Heart left ventricle (tissue), 16 donors: ENCODE measurements at regions of chr5 and their contacts with region 1.

Region 1: DNA sequence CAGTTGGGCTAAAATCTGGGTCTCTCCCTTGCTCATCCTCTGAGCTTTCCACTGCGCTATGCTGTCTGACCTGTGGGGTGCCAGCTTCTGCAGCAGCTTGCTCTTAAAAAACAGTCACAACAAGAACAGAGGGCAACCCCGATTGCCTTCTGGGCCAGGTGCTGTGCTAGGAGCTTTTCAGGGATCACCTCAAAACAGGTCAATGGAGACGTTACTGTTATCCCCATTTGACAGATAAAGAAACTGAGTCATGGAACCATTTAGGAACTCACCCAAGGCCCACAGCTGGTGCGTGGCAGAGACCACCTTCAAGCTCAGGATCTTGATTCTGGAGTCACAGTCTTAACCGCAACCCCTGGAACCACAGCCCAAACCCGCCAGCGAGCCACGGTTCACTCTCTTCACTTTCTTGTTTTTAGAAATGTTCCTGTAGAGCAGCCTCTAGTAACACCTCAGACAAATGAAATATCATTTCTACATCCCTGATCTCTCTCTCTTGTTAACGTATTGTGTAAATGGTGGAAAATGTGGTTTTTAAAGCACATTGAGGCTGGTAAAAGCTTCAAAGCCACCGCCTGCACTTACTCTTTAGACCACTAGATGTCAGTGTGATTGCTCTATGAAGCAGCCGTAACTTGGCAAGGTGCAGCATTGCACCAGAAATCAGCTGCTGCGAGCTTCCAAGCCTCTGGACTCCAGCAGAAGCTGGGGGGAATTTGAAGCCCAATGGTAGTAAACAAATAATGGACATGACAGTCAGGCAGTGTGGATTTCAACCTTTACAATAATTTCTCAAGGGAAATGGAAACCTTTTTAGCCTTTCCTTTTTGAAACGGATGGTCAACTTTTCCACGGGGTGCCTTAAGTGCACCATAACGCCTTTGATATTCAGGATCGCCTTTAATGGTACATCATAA is 1.7 kb downstream of the FYB1 start:
- DNase-seq: peak; percentile 63 to 79 (median 69)
- ATAC-seq: peak; percentile 30 to 85 (median 82)
- H3K4me3 ChIP-seq: peak overlapping the region in 3 of 12 donors; percentile 1 to 57 (median 39)
- H3K27ac ChIP-seq: peak overlapping the region in 1 of 12 donors; percentile 84
- H3K4me1 ChIP-seq: peaks cover 0 to 74% (median 0%) of the 10 kb centered on the region in 12 donors
- H3K27me3 ChIP-seq: peaks cover 0 to 8% (median 0%) of the 10 kb centered on the region in 9 donors
- CTCF ChIP-seq: peak; percentile 90 to 97 (median 94)
- POLR2A ChIP-seq: no peak

Region 2: DNA sequence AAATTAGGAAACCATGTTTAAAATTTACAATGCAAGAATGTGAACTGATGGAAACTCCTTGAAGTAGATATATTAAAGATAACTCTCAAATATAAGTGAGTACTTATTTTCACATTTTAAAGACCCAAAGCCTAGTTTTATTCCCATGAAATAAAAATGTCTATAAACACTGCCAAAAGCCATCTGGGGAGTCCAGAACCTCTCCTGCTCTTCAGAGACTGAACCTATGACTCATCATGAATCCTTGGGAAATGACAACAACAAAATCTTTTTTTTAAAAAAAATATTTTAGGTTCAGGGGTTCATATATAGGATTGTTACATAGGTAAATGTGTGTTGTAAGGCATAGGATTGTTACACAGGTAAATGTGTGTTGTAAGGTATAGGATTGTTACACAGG is 35.6 kb after region 1 on chr5:
- intact Hi-C with region 1: no loop called
- DNase-seq: no peak
- ATAC-seq: no peak
- H3K4me3 ChIP-seq: no peak overlapping the region
- H3K27ac ChIP-seq: no peak overlapping the region
- H3K4me1 ChIP-seq: peaks cover 0 to 49% (median 0%) of the 10 kb centered on the region in 12 donors
- H3K27me3 ChIP-seq: peaks cover 0 to 2% (median 0%) of the 10 kb centered on the region in 9 donors
- CTCF ChIP-seq: no peak
- POLR2A ChIP-seq: no peak

Region 3: DNA sequence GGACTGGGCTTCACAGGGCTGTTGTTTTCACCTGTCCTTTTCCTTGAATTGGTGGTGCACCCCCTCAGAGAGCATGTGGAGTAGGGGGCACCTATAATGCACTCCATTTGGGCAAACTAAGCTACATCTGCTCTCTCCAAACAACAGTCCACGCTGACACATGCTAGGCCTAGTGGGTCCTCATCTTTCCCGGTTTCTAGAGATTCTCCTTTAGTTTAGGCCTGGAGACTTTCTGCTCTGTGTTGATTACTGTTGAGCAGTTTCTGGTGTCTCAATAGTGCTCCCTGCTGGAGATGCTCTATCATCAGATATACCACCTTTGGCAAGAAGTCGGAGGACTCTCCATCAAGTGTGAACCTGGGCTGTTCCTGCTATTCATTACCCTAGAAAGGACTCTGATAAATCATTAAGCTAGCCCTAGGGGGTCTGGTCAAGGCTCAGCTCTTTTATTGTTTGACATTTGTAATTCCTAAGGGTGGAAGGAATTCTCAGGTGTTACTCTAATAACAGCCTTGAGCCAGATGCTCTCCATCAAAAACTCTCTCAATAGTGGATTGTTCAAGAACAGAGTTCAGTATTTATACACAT is 65.7 kb after region 1 on chr5:
- intact Hi-C with region 1: loop called in 9 of 10 experiments (anchors 2 to 5 kb)
- DNase-seq: peak in 2 of 5 donors; percentile 26 to 29
- ATAC-seq: peak; percentile 47 to 90 (median 82)
- H3K4me3 ChIP-seq: no peak overlapping the region
- H3K27ac ChIP-seq: no peak overlapping the region
- H3K4me1 ChIP-seq: peaks cover 0 to 6% (median 0%) of the 10 kb centered on the region in 12 donors
- H3K27me3 ChIP-seq: no peaks in the 10 kb centered on the region
- CTCF ChIP-seq: peak; percentile 38 to 70 (median 58)
- POLR2A ChIP-seq: no peak

Region 4: DNA sequence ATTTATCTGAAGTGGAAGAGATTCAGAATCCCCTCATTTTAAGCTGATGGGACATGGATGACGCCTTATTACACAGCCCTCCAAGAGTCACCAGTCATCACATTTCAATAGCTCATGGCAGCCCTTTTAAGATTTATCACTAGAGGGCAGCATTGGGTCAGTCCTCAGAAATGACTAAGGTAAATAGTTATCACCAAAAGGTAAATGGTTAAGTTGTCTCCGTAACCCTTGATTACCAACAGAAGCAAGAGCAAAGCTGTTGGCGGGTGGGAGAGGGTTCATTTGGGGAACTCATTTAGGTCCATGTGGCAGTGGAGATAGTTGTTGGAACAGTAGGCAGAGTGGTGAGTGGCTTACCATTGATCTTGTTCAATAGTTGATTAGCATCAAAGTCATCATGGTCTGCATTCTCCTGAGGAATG is 158.7 kb after region 1 on chr5:
- intact Hi-C with region 1: loop called in 3 of 10 experiments (anchors 10 kb)
- DNase-seq: no peak
- ATAC-seq: peak in 3 of 4 donors; percentile 49 to 79 (median 58)
- H3K4me3 ChIP-seq: no peak overlapping the region
- H3K27ac ChIP-seq: no peak overlapping the region
- H3K4me1 ChIP-seq: peaks cover 0 to 9% (median 0%) of the 10 kb centered on the region in 12 donors
- H3K27me3 ChIP-seq: no peaks in the 10 kb centered on the region
- CTCF ChIP-seq: peak; percentile 60 to 87 (median 73)
- POLR2A ChIP-seq: no peak

Region 5: DNA sequence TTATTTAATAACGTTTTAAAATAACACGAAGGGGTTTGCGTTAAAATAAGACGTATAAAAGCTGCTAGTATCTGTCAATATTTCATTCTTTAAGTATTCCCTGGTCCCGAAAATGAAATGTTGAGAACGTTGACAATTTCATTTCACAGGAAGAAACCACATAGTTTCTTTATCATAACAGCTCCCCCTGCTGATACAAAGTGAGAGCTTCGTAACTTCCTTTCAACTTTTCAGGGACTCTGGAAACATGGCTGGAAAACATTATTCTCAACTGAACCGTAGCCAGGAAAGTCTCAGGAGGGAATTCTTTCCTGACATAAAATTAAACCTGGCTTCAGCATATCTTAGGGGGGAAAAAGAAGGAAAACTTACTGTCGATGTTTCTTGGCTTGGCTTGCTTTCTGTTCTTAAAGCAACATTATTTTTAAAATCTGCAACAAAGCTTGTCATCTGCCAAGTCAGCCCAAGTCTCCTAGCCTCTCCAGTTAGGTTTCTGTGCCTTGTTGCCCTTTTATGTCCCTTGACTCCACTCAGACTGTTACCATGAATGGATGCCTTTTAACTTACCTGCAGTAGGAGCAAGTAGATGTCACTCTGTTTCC is 330.0 kb after region 1 on chr5:
- intact Hi-C with region 1: loop called in 5 of 10 experiments (anchors 2 to 10 kb)
- DNase-seq: peak in 2 of 5 donors; percentile 62 to 72
- ATAC-seq: peak; percentile 25 to 76 (median 63)
- H3K4me3 ChIP-seq: peak overlapping the region in 2 of 12 donors; percentile 6 to 15
- H3K27ac ChIP-seq: no peak overlapping the region
- H3K4me1 ChIP-seq: peaks cover 0 to 28% (median 7%) of the 10 kb centered on the region in 12 donors
- H3K27me3 ChIP-seq: no peaks in the 10 kb centered on the region
- CTCF ChIP-seq: peak; percentile 61 to 87 (median 74)
- POLR2A ChIP-seq: no peak

Region 6: DNA sequence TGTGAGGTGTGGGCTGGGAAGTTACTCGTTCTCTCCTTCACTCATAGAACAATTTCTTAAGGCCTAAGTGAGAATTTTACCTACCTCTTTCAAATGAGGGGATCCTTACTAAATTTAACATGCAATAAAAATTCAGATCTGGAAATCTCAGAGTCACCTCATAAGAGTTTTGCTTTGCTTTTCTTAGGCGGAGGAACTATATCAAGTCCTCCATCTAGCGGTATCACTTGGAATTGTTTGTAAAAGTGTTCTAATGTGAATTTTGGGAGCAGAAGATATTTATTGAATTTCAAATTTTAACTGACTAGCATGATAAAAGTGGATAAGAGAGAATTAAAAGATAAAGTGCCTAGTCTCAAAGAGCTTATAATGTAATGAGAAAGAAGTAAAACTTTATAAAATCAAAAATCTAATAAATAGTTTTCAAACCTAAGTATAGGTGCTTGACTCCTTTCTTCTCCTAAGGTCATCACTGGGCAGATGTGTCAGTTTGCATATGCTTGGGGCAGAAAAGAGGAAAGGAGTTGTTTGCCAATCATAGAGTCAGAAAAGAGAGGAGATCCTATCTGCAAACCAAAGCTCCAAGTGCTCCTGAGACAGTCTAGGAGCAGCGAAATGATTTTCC is 352.9 kb after region 1 on chr5:
- intact Hi-C with region 1: loop called (anchors 1 to 10 kb)
- DNase-seq: no peak
- ATAC-seq: no peak
- H3K4me3 ChIP-seq: no peak overlapping the region
- H3K27ac ChIP-seq: no peak overlapping the region
- H3K4me1 ChIP-seq: peaks cover 0 to 8% (median 0%) of the 10 kb centered on the region in 12 donors
- H3K27me3 ChIP-seq: peaks cover 0 to 8% (median 0%) of the 10 kb centered on the region in 9 donors
- CTCF ChIP-seq: peak; percentile 46 to 80 (median 67)
- POLR2A ChIP-seq: no peak